B cell (primary cell): ENCODE measurements at regions of chr4 and their contacts with region 1.

Region 1: DNA sequence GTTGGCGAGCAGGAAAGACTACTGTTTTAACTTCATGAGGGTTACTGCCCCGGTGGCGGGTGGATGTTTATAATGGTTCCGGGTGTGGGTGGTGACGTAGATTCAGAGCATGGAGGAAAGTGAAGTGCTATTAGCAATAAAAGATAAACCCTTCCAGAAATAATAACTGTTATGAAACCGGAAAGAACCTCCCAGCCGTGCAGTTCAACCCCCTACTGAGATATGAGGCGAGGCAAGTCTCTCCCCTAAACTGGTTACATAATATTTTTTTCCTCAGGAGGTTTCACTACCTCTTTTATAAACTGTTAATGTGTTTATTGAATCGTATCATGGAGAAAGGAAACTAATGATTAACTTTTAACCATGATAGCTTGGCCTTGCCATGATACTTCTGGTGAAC is 33.9 kb upstream of the STIM2 start:
- DNase-seq: peak; percentile 84
- ATAC-seq: peak; percentile 83
- H3K4me3 ChIP-seq: peak overlapping the region in 4 of 5 experiments; percentile 7 to 59 (median 24)
- H3K4me3 Mint-ChIP-seq: peak overlapping the region; percentile 77
- H3K27ac ChIP-seq: peak overlapping the region; percentile 29 to 45
- H3K27ac Mint-ChIP-seq: peak overlapping the region; percentile 62
- H3K4me1 ChIP-seq: peaks cover 75 to 78% of the 10 kb centered on the region in 2 donors
- H3K4me1 Mint-ChIP-seq: peaks cover 79% of the 10 kb centered on the region
- H3K27me3 ChIP-seq: peaks cover 0 to 27% (median 9%) of the 10 kb centered on the region in 4 experiments
- H3K27me3 Mint-ChIP-seq: peaks cover 12% of the 10 kb centered on the region
- CTCF ChIP-seq: no peak

Region 2: GRCh38 chr4:26583865-26584652 is 242.7 kb before region 1 on chr4 and contains the start of gene TBC1D19:
- CTCF ChIA-PET with region 1: interaction called, 3 read pairs
- POLR2A ChIA-PET with region 1: no interaction called
- intact Hi-C with region 1: loop called (anchors 1 kb)
- DNase-seq: peak; percentile 90
- ATAC-seq: peak; percentile 95
- H3K4me3 ChIP-seq: peak within 1 kb of the TSS; percentile 43 to 92 (median 82)
- H3K4me3 Mint-ChIP-seq: peak within 1 kb of the TSS; percentile 88
- H3K27ac ChIP-seq: peak within 1 kb of the TSS; percentile 85 to 87
- H3K27ac Mint-ChIP-seq: peak within 1 kb of the TSS; percentile 91
- H3K4me1 ChIP-seq: peaks cover 11 to 13% of the 10 kb centered on the region in 2 donors
- H3K4me1 Mint-ChIP-seq: peaks cover 26% of the 10 kb centered on the region
- H3K27me3 ChIP-seq: no peaks in the 10 kb centered on the region
- H3K27me3 Mint-ChIP-seq: peaks cover 7% of the 10 kb centered on the region
- CTCF ChIP-seq: no peak
- total RNA-seq, gene TBC1D19: 10.0 and 11.0 TPM in 2 replicates

Region 3: GRCh38 chr4:26787461-26788340 is 39.0 kb before region 1 on chr4:
- CTCF ChIA-PET with region 1: interaction called, 6 read pairs
- POLR2A ChIA-PET with region 1: no interaction called
- intact Hi-C with region 1: loop called (anchors 5 kb)
- DNase-seq: peak; percentile 53
- ATAC-seq: peak; percentile 44
- H3K4me3 ChIP-seq: no peak overlapping the region
- H3K4me3 Mint-ChIP-seq: peak overlapping the region; percentile 30
- H3K27ac ChIP-seq: no peak overlapping the region
- H3K27ac Mint-ChIP-seq: no peak overlapping the region
- H3K4me1 ChIP-seq: peaks cover 29 to 31% of the 10 kb centered on the region in 2 donors
- H3K4me1 Mint-ChIP-seq: peaks cover 33% of the 10 kb centered on the region
- H3K27me3 ChIP-seq: peaks cover 0 to 15% (median 6%) of the 10 kb centered on the region in 4 experiments
- H3K27me3 Mint-ChIP-seq: peaks cover 14% of the 10 kb centered on the region
- CTCF ChIP-seq: peak; percentile 35

Region 4: GRCh38 chr4:26809811-26810210 is 16.9 kb before region 1 on chr4:
- CTCF ChIA-PET with region 1: interaction called, 4 read pairs
- POLR2A ChIA-PET with region 1: no interaction called
- intact Hi-C with region 1: loop called (anchors 2 kb)
- DNase-seq: no peak
- ATAC-seq: no peak
- H3K4me3 ChIP-seq: no peak overlapping the region
- H3K4me3 Mint-ChIP-seq: no peak overlapping the region
- H3K27ac ChIP-seq: no peak overlapping the region
- H3K27ac Mint-ChIP-seq: no peak overlapping the region
- H3K4me1 ChIP-seq: peaks cover 42 to 49% of the 10 kb centered on the region in 2 donors
- H3K4me1 Mint-ChIP-seq: peaks cover 56% of the 10 kb centered on the region
- H3K27me3 ChIP-seq: peaks cover 0 to 65% (median 19%) of the 10 kb centered on the region in 4 experiments
- H3K27me3 Mint-ChIP-seq: peaks cover 36% of the 10 kb centered on the region
- CTCF ChIP-seq: no peak

Region 5: GRCh38 chr4:26842911-26843310 is 16.2 kb after region 1 on chr4:
- CTCF ChIA-PET with region 1: interaction called, 3 read pairs
- POLR2A ChIA-PET with region 1: no interaction called
- intact Hi-C with region 1: loop called (anchors 2 kb)
- DNase-seq: no peak
- ATAC-seq: no peak
- H3K4me3 ChIP-seq: no peak overlapping the region
- H3K4me3 Mint-ChIP-seq: no peak overlapping the region
- H3K27ac ChIP-seq: no peak overlapping the region
- H3K27ac Mint-ChIP-seq: no peak overlapping the region
- H3K4me1 ChIP-seq: peaks cover 0 to 3% of the 10 kb centered on the region in 2 donors
- H3K4me1 Mint-ChIP-seq: peaks cover 5% of the 10 kb centered on the region
- H3K27me3 ChIP-seq: peaks cover 0 to 4% (median 0%) of the 10 kb centered on the region in 4 experiments
- H3K27me3 Mint-ChIP-seq: peaks cover 4% of the 10 kb centered on the region
- CTCF ChIP-seq: no peak

Region 6: DNA sequence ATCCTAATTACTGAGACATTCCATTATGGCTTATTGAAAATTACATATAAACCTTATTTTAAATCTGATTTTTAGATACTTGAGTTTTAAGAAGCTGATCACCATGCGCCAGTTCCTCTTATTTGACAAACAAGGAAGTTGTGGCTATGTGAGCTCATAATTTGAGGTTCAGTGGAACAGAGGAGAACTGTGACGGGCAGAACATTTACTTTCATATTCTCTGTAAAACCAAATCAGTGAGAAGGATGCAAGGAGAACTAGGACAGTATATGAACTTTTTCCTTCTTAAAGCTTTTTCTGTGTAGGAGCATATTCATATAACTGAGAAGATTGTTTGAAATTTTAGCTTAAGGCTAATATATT is 59.2 kb after region 1 on chr4:
- CTCF ChIA-PET with region 1: interaction called, 9 read pairs
- POLR2A ChIA-PET with region 1: no interaction called
- intact Hi-C with region 1: loop called (anchors 1 kb)
- DNase-seq: peak; percentile 87
- ATAC-seq: peak; percentile 74
- H3K4me3 ChIP-seq: peak overlapping the region in 4 of 5 experiments; percentile 25 to 61 (median 42)
- H3K4me3 Mint-ChIP-seq: peak overlapping the region; percentile 78
- H3K27ac ChIP-seq: peak overlapping the region; percentile 95 to 98
- H3K27ac Mint-ChIP-seq: peak overlapping the region; percentile 86
- H3K4me1 ChIP-seq: peaks cover 70 to 71% of the 10 kb centered on the region in 2 donors
- H3K4me1 Mint-ChIP-seq: peaks cover 83% of the 10 kb centered on the region
- H3K27me3 ChIP-seq: no peaks in the 10 kb centered on the region
- H3K27me3 Mint-ChIP-seq: no peaks in the 10 kb centered on the region
- CTCF ChIP-seq: no peak